Esophagus squamous epithelium (tissue), 5 donors: ENCODE measurements at regions of chr7 and their contacts with region 1.

Region 1: DNA sequence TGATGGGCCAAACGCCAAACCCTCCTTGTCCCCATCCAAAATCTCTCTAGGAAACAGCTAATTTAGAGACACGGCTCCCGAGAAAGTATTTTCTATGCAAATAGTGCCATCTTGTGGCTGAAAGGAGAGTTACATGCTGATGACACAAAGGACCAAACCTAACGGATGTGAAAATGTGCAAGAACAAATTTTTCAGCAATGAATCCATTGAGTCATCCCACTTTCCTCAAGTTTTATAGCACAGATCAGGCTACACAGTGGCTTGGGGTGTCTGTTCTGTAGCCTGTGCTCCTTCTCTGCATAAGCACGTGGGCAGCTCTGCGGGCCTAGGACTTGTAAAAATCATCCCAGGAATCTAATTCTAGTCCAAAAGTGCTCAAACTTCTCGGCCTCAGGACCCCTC is 154.8 kb upstream of the PRR15 start:
- DNase-seq: no peak
- H3K4me3 ChIP-seq: no peak overlapping the region
- H3K27ac ChIP-seq: no peak overlapping the region
- H3K4me1 ChIP-seq: no peaks in the 10 kb centered on the region
- H3K27me3 ChIP-seq: no peaks in the 10 kb centered on the region
- CTCF ChIP-seq: peak; percentile 85 to 91 (median 89)
- POLR2A ChIP-seq: no peak

Region 2: DNA sequence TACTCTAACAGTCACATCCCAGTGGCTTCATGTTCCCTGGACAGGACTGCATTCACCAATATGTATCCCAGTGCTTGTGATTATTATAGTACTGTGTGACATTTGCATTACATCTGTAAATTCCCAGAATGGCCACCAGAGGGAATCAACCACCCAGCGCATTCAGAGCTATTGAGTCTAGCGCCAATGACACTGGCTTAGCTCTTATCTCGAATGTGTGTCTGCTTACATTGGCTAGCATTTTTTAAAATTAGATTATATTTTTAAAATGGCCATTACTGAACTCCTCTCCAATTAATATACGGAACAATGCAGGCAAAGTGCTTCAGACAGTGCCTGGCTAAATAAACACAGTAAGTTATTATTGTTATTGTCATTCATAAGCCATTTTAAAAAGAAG is 487.0 kb before region 1 on chr7:
- intact Hi-C with region 1: loop called (anchors 5 kb)
- DNase-seq: no peak
- H3K4me3 ChIP-seq: no peak overlapping the region
- H3K27ac ChIP-seq: no peak overlapping the region
- H3K4me1 ChIP-seq: peaks cover 3 to 21% (median 11%) of the 10 kb centered on the region in 3 donors
- H3K27me3 ChIP-seq: peaks cover 0 to 6% (median 0%) of the 10 kb centered on the region in 4 donors
- CTCF ChIP-seq: peak; percentile 82 to 92 (median 88)
- POLR2A ChIP-seq: no peak

Region 3: DNA sequence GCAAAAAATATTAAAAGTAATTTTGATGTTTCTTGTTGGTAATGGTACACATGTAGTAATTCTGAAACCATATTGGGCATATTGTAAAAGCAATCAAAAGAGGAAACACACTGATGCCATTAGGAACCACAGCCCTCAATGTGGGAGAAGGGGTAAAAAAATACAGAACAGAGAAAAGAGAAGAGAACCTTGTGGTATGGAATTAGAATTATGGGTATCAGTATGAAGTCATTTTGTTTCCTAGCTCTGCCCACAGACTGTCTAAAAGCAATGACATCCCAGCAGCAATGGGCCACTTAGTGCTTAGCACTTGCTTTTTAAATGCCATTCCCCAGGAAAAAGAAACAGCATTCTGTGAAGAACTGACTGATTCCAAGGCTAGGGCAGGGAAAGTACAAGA is 324.0 kb before region 1 on chr7:
- intact Hi-C with region 1: no loop called
- DNase-seq: no peak
- H3K4me3 ChIP-seq: no peak overlapping the region
- H3K27ac ChIP-seq: no peak overlapping the region
- H3K4me1 ChIP-seq: peaks cover 0 to 13% (median 8%) of the 10 kb centered on the region in 3 donors
- H3K27me3 ChIP-seq: no peaks in the 10 kb centered on the region
- CTCF ChIP-seq: no peak
- POLR2A ChIP-seq: no peak

Region 4: DNA sequence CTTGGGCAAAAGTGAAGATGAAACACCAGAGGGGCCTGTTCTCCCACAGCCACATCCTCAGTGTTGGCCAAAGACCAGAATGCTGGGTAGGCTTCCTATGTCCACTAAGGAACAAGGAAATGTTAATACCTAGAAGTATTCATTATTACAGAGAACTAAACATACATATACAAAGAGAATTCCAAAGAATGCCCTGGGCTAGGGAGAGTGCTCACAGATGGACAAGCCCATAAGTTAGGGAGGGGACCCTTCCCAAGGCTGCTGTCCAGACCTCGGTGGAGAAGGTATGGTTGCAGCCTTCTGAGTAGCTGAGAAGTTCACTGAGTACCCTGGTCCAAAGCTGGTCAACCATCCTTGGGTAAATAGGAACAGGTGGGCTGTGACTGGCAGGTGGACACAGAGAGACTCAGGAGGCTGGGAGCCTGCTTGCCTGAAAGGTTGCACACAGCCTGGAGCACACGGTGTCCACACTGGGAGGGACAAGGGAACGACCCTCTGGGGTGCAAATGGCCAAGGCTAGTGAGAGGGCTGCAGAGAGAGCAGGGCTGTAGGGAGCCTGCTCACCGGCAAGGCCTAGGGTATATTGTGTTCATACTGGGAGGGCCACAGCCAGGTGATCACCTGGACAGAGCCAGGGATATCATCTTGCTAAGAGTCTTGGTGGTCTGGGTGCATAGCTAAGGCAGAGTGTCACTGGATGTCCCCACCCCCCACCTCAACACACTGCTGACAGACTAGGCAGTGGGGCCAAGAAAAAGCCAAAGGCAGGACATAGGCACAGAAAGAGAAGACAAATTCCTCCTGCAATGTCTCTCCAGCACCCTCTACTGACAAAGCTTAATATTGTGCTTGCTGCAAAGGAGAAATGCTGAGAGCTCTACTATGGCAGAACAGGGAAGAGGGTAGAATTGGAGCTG is 302.8 kb before region 1 on chr7:
- intact Hi-C with region 1: loop called (anchors 5 kb)
- DNase-seq: no peak
- H3K4me3 ChIP-seq: no peak overlapping the region
- H3K27ac ChIP-seq: no peak overlapping the region
- H3K4me1 ChIP-seq: peaks cover 0 to 39% (median 8%) of the 10 kb centered on the region in 3 donors
- H3K27me3 ChIP-seq: no peaks in the 10 kb centered on the region
- CTCF ChIP-seq: peak; percentile 37 to 86 (median 77)
- POLR2A ChIP-seq: no peak

Region 5: GRCh38 chr7:29189743-29190201 is 219.1 kb before region 1 on chr7:
- intact Hi-C with region 1: loop called (anchors 10 kb)
- DNase-seq: no peak
- H3K4me3 ChIP-seq: no peak overlapping the region
- H3K27ac ChIP-seq: no peak overlapping the region
- H3K4me1 ChIP-seq: peaks cover 6 to 22% (median 10%) of the 10 kb centered on the region in 3 donors
- H3K27me3 ChIP-seq: peaks cover 0 to 40% (median 0%) of the 10 kb centered on the region in 4 donors
- CTCF ChIP-seq: peak; percentile 51 to 83 (median 72)
- POLR2A ChIP-seq: no peak